Sciatic nerve (tissue), 2 donors: ENCODE measurements at regions of chr11 and their contacts with region 1.

Region 1: GRCh38 chr11:86068951-86069407 is at the start of gene PICALM:
- DNase-seq: peak; percentile 99
- ATAC-seq: peak; percentile 99
- total RNA-seq, gene PICALM: 314 TPM

Region 2: GRCh38 chr11:86003654-86004053 is 65.3 kb before region 1 on chr11:
- intact Hi-C with region 1: no loop called
- DNase-seq: no peak
- ATAC-seq: no peak

Region 3: GRCh38 chr11:86193297-86194095 is 124.5 kb after region 1 on chr11:
- intact Hi-C with region 1: loop called (anchors 10 kb)
- DNase-seq: peak; percentile 70
- ATAC-seq: peak; percentile 96